H1 (cell line): ENCODE measurements at regions of chr22 and their contacts with region 1.

Region 1: GRCh38 chr22:32080904-32081303 is 37.8 kb downstream of the SLC5A1 start:
- DNase-seq: no peak
- H3K4me3 ChIP-seq: no peak overlapping the region
- H3K27ac ChIP-seq: no peak overlapping the region
- H3K4me1 ChIP-seq: no peaks in the 10 kb centered on the region
- H3K27me3 ChIP-seq: peaks cover 0 to 4% (median 0%) of the 10 kb centered on the region in 4 experiments; a peak in 1 of 7 replicates
- CTCF ChIP-seq: peak; percentile 14 to 80 (median 79)
- EP300 ChIP-seq: no peak
- POLR2A ChIP-seq: no peak
- RAD21 ChIP-seq: peak; percentile 89 to 91

Region 2: GRCh38 chr22:32069579-32070372 is 11.1 kb before region 1 on chr22:
- CTCF ChIA-PET with region 1: interaction called, 29 read pairs
- POLR2A ChIA-PET with region 1: no interaction called
- DNase-seq: no peak
- H3K4me3 ChIP-seq: no peak overlapping the region
- H3K27ac ChIP-seq: no peak overlapping the region
- H3K4me1 ChIP-seq: no peaks in the 10 kb centered on the region
- H3K27me3 ChIP-seq: no peaks in the 10 kb centered on the region
- CTCF ChIP-seq: no peak
- EP300 ChIP-seq: no peak
- POLR2A ChIP-seq: no peak
- RAD21 ChIP-seq: no peak

Region 3: DNA sequence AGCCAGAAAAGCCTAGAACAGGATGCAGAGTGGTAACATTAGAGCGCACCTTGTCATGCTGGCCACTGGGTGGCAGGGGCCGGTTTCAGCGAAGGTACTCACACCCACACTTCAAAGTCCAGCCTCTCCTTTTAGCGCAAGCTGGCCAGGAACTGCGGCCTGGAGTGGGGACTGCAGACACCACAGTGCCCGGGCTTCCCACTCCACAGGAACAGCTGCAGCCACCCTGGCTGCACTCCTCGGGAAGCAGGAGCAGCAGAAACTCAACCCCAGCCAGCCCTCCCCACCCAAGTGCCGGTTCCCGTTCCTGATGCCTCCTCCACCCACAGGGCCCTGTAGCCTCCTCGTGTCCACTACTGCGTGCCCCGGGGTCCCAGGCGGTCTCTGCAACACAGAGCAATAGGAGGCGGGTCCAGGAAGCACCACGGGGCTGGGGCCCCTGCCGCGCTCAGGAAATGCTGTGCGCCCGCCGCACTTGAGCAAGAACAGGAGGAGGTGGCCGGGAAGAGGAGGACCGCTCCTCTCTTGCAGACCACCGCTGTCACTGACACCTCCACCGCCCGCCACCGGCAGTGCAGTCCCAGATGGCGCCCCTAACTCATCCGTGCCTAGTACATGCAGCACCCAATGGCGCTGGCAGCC is 121.8 kb after region 1 on chr22:
- CTCF ChIA-PET with region 1: no interaction called
- POLR2A ChIA-PET with region 1: no interaction called
- DNase-seq: peak in 1 of 2 experiments; percentile 59
- H3K4me3 ChIP-seq: peak overlapping the region in 3 of 4 experiments; percentile 47 to 61 (median 56); a peak in 4 of 8 replicates
- H3K27ac ChIP-seq: no peak overlapping the region
- H3K4me1 ChIP-seq: peaks cover 0 to 32% (median 15%) of the 10 kb centered on the region in 4 experiments; a peak in 5 of 7 replicates
- H3K27me3 ChIP-seq: peaks cover 19 to 50% (median 42%) of the 10 kb centered on the region in 4 experiments
- CTCF ChIP-seq: peak; percentile 77 to 89 (median 87)
- EP300 ChIP-seq: no peak
- POLR2A ChIP-seq: no peak
- RAD21 ChIP-seq: peak; percentile 58 to 68